ENCODE measurements at regions of chr20 and their contacts with region 1.

Region 1: GRCh38 chr20:40922865-40923264 is 105.8 kb upstream of the TOP1 start:
- DNase-seq: no peak

Region 2: GRCh38 chr20:39282619-39283392 is 1640.1 kb before region 1 on chr20:
- intact Hi-C with region 1: loop called in 1 of 2 experiments (anchors 5 kb)
- DNase-seq: no peak

Measured in posterior vena cava (tissue), 2 donors.